A673 (cell line): ENCODE measurements at regions of chr18 and their contacts with region 1.

Region 1: DNA sequence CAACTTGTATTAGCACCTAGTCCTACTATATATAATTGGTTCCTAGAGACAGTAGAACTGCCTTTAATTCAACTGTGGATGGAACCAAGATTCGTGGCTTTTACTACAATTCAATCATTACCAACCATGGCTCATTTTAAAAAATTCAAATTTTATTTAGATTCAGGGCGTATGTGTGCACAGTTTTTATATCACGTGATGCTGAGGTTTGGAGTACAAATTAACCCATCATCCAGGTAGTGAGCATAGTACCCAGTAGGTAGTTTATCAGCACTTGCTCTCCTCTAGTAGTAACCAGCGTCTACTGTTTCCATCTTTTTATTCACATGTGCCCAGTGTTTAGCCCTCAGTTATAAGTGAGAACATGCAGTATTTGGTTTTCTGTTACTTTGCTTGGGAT is 367.9 kb upstream of the DSEL start:
- DNase-seq: no peak
- H3K4me3 ChIP-seq: no peak overlapping the region
- H3K27ac ChIP-seq: no peak overlapping the region
- H3K4me1 ChIP-seq: peaks cover 9% of the 10 kb centered on the region
- H3K27me3 ChIP-seq: no peaks in the 10 kb centered on the region
- CTCF ChIP-seq: no peak

Region 2: GRCh38 chr18:67788310-67789164 is 95.9 kb before region 1 on chr18:
- CTCF ChIA-PET with region 1: no interaction called
- POLR2A ChIA-PET with region 1: no interaction called
- intact Hi-C with region 1: no loop called
- DNase-seq: no peak
- H3K4me3 ChIP-seq: no peak overlapping the region
- H3K27ac ChIP-seq: no peak overlapping the region
- H3K4me1 ChIP-seq: peaks cover under 1% of the 10 kb centered on the region
- H3K27me3 ChIP-seq: no peaks in the 10 kb centered on the region
- CTCF ChIP-seq: no peak

Region 3: DNA sequence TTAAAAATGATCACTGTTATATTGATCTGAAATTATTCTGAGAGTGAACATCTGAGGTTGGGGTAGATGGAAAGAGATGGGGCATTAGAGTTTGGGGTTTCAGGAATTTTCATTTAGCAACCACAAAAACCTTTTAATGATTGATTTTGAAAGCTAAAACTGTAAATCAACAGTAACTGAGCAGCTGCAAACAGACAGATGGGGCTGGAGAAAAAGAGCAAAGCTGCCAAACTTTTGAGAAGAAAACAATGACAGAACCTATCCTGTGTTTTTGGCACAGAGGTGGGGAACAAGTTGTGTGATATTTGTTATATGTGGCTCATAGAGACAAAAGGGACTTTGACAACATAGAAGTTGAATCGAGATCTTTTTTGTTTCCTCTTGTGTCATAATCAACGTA is 47.8 kb after region 1 on chr18:
- CTCF ChIA-PET with region 1: no interaction called
- POLR2A ChIA-PET with region 1: no interaction called
- intact Hi-C with region 1: loop called (anchors 5 kb)
- DNase-seq: no peak
- H3K4me3 ChIP-seq: no peak overlapping the region
- H3K27ac ChIP-seq: no peak overlapping the region
- H3K4me1 ChIP-seq: no peaks in the 10 kb centered on the region
- H3K27me3 ChIP-seq: no peaks in the 10 kb centered on the region
- CTCF ChIP-seq: no peak

Region 4: DNA sequence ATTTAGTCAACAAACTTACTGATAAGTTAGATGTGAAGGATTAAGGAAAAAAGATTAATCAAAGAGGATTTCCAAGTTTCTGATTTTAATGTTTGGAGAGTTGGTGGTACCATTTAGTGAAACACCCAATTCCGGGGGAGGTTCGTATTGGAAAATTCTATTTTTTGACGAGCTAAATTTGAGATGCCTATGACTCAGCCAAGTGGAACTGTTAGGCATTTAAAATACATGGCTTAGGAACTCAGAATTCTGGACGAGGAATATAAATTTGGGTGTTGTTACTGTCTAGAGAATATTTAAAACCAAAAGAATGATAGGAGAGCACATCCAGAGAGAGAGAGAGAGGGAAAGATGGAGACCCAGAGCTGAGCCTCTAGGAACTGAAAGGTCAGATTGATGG is 726.9 kb after region 1 on chr18:
- CTCF ChIA-PET with region 1: no interaction called
- POLR2A ChIA-PET with region 1: no interaction called
- intact Hi-C with region 1: loop called (anchors 10 kb)
- DNase-seq: no peak
- H3K4me3 ChIP-seq: no peak overlapping the region
- H3K27ac ChIP-seq: no peak overlapping the region
- H3K4me1 ChIP-seq: no peaks in the 10 kb centered on the region
- H3K27me3 ChIP-seq: no peaks in the 10 kb centered on the region
- CTCF ChIP-seq: no peak